Activated naive CD4-positive, alpha-beta T cell treated with anti-CD3 and anti-CD28 coated beads for 36 hours (primary cell): ENCODE measurements at regions of chr3 and their contacts with region 1.

Region 1: DNA sequence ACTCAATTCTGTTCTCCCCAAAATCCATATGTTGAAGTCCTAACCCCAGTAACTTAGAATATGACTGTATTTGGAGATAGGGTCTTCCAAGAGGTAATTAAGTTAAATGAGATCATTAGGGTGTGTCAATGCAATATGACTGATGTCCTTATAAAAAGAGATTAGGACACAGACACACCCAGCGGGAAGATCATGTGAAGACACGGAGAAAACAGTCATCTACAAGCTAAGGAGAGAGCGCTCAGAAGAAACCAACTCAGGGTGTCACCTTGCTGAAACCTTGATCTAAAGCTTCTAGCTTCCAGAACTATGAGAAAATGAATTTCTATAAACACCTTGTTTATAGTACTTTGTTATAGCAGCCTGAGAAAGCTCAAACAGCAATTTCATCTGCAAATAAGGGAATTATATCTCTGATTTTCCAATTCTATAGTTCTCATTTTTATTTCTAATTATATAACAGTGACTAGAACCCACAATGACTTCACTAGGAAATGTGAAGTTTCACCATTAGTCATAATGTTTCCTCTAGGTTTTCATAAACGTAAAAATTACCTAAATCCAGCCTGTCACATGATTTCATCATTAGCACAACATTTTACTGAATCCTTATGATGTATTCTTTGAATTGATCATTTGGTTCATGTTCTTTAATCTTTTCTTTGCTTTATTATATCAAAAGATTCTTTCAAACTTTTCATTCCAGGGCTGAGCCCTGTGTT is 459.1 kb upstream of the MDFIC2 start:
- DNase-seq: no peak
- H3K4me3 Mint-ChIP-seq: no peak overlapping the region
- H3K27ac Mint-ChIP-seq: no peak overlapping the region
- H3K4me1 Mint-ChIP-seq: peaks cover 14% of the 10 kb centered on the region
- H3K27me3 Mint-ChIP-seq: peaks cover 25% of the 10 kb centered on the region

Region 2: GRCh38 chr3:70856414-70857162 is 85.0 kb after region 1 on chr3:
- CTCF ChIA-PET with region 1: no interaction called
- intact Hi-C with region 1: loop called (anchors 1 kb)
- DNase-seq: peak; percentile 10
- H3K4me3 Mint-ChIP-seq: no peak overlapping the region
- H3K27ac Mint-ChIP-seq: no peak overlapping the region
- H3K4me1 Mint-ChIP-seq: peaks cover 28% of the 10 kb centered on the region
- H3K27me3 Mint-ChIP-seq: peaks cover 23% of the 10 kb centered on the region

Region 3: GRCh38 chr3:70916375-70917065 is 144.9 kb after region 1 on chr3:
- CTCF ChIA-PET with region 1: no interaction called
- intact Hi-C with region 1: no loop called
- DNase-seq: no peak
- H3K4me3 Mint-ChIP-seq: no peak overlapping the region
- H3K27ac Mint-ChIP-seq: no peak overlapping the region
- H3K4me1 Mint-ChIP-seq: no peaks in the 10 kb centered on the region
- H3K27me3 Mint-ChIP-seq: peaks cover 3% of the 10 kb centered on the region

Region 4: GRCh38 chr3:71050538-71051258 is 279.1 kb after region 1 on chr3:
- CTCF ChIA-PET with region 1: no interaction called
- intact Hi-C with region 1: loop called (anchors 1 kb)
- DNase-seq: peak; percentile 77
- H3K4me3 Mint-ChIP-seq: peak overlapping the region; percentile 6
- H3K27ac Mint-ChIP-seq: peak overlapping the region; percentile 92
- H3K4me1 Mint-ChIP-seq: peaks cover 100% of the 10 kb centered on the region
- H3K27me3 Mint-ChIP-seq: no peaks in the 10 kb centered on the region

Region 5: DNA sequence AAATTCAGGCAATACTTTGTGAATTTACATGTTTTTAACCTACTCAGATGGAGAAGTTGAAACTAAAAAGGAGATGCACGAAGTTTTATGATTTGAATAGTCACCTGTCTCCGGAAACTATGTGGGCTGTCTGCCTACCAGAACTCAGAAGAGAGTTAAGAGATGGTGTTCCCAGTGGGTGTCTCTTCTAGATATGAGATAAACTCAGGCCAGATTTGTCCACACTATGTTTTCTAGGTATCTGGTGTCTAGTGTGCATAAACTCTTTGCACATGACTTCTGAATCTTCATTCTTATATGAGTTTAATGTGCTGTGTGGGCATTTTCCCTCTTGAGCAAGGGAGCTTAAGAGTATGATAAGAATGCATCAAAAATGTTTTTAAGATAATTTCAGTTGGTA is 589.2 kb after region 1 on chr3:
- CTCF ChIA-PET with region 1: no interaction called
- intact Hi-C with region 1: loop called (anchors 5 kb)
- DNase-seq: peak; percentile 43
- H3K4me3 Mint-ChIP-seq: peak overlapping the region; percentile 48
- H3K27ac Mint-ChIP-seq: peak overlapping the region; percentile 70
- H3K4me1 Mint-ChIP-seq: peaks cover 82% of the 10 kb centered on the region
- H3K27me3 Mint-ChIP-seq: no peaks in the 10 kb centered on the region

Region 6: DNA sequence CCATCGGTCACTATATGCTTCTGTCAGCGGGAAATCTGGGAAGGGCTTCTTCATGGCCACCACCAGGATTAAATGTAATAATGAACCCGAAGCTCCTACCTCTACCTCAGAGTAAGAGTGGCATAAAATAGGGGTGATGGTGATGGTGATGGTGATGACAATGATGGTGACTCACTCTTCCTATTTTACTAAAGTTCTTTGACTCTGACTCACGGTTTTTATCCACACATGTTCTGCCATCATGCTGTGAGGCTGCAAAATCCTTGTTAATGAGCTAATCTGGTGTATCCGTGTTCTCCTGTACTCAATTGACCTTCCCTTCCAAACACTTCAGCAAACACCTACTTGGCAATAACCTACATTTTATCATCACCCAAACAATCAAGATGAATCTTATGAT is 830.2 kb after region 1 on chr3:
- CTCF ChIA-PET with region 1: no interaction called
- intact Hi-C with region 1: loop called (anchors 1 kb)
- DNase-seq: no peak
- H3K4me3 Mint-ChIP-seq: no peak overlapping the region
- H3K27ac Mint-ChIP-seq: no peak overlapping the region
- H3K4me1 Mint-ChIP-seq: peaks cover 30% of the 10 kb centered on the region
- H3K27me3 Mint-ChIP-seq: no peaks in the 10 kb centered on the region